Activated CD4-positive, alpha-beta memory T cell treated with anti-CD3 and anti-CD28 coated beads for 36 hours (primary cell): ENCODE measurements at regions of chr16 and their contacts with region 1.

Region 1: GRCh38 chr16:11255737-11256660 is at the start of gene SOCS1:
- DNase-seq: peak; percentile 92
- H3K4me3 Mint-ChIP-seq: peak within 1 kb of the TSS; percentile 98
- H3K27ac Mint-ChIP-seq: peak within 1 kb of the TSS; percentile 99
- H3K4me1 Mint-ChIP-seq: peaks cover 48% of the 10 kb centered on the region
- H3K27me3 Mint-ChIP-seq: peaks cover 6% of the 10 kb centered on the region
- total RNA-seq, gene SOCS1: 146 to 152 TPM

Region 2: GRCh38 chr16:10957771-10958486 is 298.1 kb before region 1 on chr16:
- CTCF ChIA-PET with region 1: interaction called, 118 read pairs
- POLR2A ChIA-PET with region 1: interaction called, 93 read pairs
- intact Hi-C with region 1: no loop called
- DNase-seq: peak; percentile 65
- H3K4me3 Mint-ChIP-seq: peak overlapping the region; percentile 7
- H3K27ac Mint-ChIP-seq: peak overlapping the region; percentile 87
- H3K4me1 Mint-ChIP-seq: peaks cover 73% of the 10 kb centered on the region
- H3K27me3 Mint-ChIP-seq: no peaks in the 10 kb centered on the region

Region 3: GRCh38 chr16:10988164-10988803 is 267.7 kb before region 1 on chr16:
- CTCF ChIA-PET with region 1: interaction called, 21 read pairs
- POLR2A ChIA-PET with region 1: interaction called, 21 read pairs
- intact Hi-C with region 1: loop called (anchors 1 kb)
- DNase-seq: peak; percentile 93
- H3K4me3 Mint-ChIP-seq: peak overlapping the region; percentile 33
- H3K27ac Mint-ChIP-seq: peak overlapping the region; percentile 98
- H3K4me1 Mint-ChIP-seq: peaks cover 90% of the 10 kb centered on the region
- H3K27me3 Mint-ChIP-seq: no peaks in the 10 kb centered on the region

Region 4: GRCh38 chr16:11016993-11017392 is 239.0 kb before region 1 on chr16:
- CTCF ChIA-PET with region 1: no interaction called
- POLR2A ChIA-PET with region 1: no interaction called
- intact Hi-C with region 1: no loop called
- DNase-seq: peak; percentile 39
- H3K4me3 Mint-ChIP-seq: no peak overlapping the region
- H3K27ac Mint-ChIP-seq: no peak overlapping the region
- H3K4me1 Mint-ChIP-seq: peaks cover 8% of the 10 kb centered on the region
- H3K27me3 Mint-ChIP-seq: no peaks in the 10 kb centered on the region

Region 5: DNA sequence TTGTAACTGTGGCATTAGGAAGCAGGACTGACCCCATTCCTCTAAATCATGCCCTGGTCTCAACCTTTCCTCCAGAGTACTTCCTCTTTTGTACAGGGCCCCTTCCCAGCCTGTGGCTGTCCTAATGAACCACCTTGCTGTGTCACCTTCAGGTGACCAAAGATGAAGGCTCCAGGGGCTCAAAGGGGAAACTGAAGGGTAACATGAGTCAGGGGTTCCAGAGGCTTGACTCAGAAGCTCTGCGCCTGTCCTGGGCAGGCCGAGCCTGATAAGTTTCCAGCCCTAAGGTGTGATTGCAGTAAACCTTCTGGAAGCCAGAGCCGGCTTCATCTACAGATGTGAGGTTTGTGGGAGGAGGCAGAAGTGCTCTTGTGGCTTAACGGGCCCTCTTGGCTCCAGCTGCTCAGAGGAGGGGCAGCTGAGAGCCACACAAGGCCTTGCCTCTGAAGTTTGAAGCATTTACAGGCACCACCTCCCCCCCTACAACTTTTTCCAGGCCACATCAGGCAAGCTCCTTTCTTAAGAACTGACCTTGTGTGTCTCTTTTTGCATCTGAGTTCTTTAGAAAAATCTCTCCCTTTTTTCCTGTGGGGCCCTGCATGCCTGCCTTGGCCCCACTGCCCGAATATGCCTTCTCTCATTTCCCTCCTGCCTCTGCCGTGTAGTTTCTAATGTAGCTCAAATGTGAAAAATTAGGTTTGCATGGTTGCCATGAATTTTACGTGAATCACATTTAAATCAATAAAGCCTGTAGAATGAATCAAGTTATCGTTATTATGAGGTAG is 161.7 kb before region 1 on chr16:
- CTCF ChIA-PET with region 1: interaction called, 14 read pairs
- POLR2A ChIA-PET with region 1: interaction called, 60 read pairs
- intact Hi-C with region 1: loop called (anchors 1 kb)
- DNase-seq: peak; percentile 87
- H3K4me3 Mint-ChIP-seq: peak overlapping the region; percentile 49
- H3K27ac Mint-ChIP-seq: peak overlapping the region; percentile 98
- H3K4me1 Mint-ChIP-seq: peaks cover 82% of the 10 kb centered on the region
- H3K27me3 Mint-ChIP-seq: no peaks in the 10 kb centered on the region

Region 6: DNA sequence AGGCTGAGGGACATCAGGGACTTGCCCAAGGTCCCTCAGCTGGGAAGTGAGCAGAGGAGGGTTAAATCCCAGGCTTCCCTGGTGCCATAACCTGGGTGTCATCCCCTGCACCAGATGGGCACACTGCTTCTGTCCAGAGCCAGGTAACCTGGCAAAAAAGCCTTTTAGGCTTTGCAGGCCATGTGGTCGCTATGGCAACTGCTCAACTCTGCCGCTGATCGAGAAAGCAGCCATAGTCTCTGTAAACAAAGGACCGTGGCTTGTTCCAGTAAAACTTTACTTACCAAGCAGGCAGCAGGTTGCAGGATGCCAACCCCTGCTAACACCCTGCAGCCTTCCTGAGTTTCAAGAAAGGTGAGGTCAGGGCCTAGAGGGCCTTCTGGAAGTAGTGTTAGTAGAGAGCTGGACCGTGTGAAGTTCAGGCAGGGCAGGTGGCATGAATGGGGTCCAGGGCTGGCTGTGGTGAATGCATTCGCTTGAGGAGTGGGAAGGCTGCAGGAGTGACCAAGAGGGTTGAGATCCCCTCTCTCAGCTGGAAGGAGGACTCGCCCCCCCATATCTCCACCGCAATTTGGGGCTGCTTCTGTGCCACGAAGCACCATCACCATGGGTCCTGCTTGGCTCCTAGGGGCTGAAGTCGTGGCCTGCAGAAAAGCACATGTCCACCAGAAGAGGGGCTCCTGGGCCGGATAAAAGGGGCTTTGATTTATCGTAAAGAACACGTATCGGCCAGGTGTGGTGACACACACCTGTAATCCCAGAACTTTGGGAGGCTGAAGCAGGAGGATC is 91.3 kb before region 1 on chr16:
- CTCF ChIA-PET with region 1: interaction called, 20 read pairs
- POLR2A ChIA-PET with region 1: interaction called, 13 read pairs
- intact Hi-C with region 1: no loop called
- DNase-seq: no peak
- H3K4me3 Mint-ChIP-seq: no peak overlapping the region
- H3K27ac Mint-ChIP-seq: peak overlapping the region; percentile 24
- H3K4me1 Mint-ChIP-seq: peaks cover 26% of the 10 kb centered on the region
- H3K27me3 Mint-ChIP-seq: no peaks in the 10 kb centered on the region

Region 7: GRCh38 chr16:11224096-11224893 is 31.7 kb before region 1 on chr16:
- CTCF ChIA-PET with region 1: interaction called, 24 read pairs
- POLR2A ChIA-PET with region 1: interaction called, 129 read pairs
- intact Hi-C with region 1: loop called (anchors 1 kb)
- DNase-seq: peak; percentile 88
- H3K4me3 Mint-ChIP-seq: peak overlapping the region; percentile 71
- H3K27ac Mint-ChIP-seq: peak overlapping the region; percentile 99
- H3K4me1 Mint-ChIP-seq: peaks cover 56% of the 10 kb centered on the region
- H3K27me3 Mint-ChIP-seq: no peaks in the 10 kb centered on the region

Region 8: GRCh38 chr16:11356573-11357331 is 100.8 kb after region 1 on chr16:
- CTCF ChIA-PET with region 1: interaction called, 59 read pairs
- POLR2A ChIA-PET with region 1: interaction called, 47 read pairs
- intact Hi-C with region 1: loop called (anchors 1 kb)
- DNase-seq: peak; percentile 73
- H3K4me3 Mint-ChIP-seq: peak overlapping the region; percentile 13
- H3K27ac Mint-ChIP-seq: peak overlapping the region; percentile 18
- H3K4me1 Mint-ChIP-seq: peaks cover 58% of the 10 kb centered on the region
- H3K27me3 Mint-ChIP-seq: peaks cover 28% of the 10 kb centered on the region